ENCODE measurements at regions of chr12 and their contacts with region 1.

Region 1: GRCh38 chr12:32679091-32679919 is at the start of gene DNM1L:
- DNase-seq: peak; percentile 89
- H3K4me3 Mint-ChIP-seq: peak within 1 kb of the TSS; percentile 93
- H3K27ac Mint-ChIP-seq: peak within 1 kb of the TSS; percentile 89
- H3K4me1 Mint-ChIP-seq: peaks cover 25% of the 10 kb centered on the region
- H3K27me3 Mint-ChIP-seq: no peaks in the 10 kb centered on the region
- total RNA-seq, gene DNM1L: 97.5 and 108 TPM in 2 replicates

Region 2: GRCh38 chr12:31659087-31659933 is 1020.0 kb before region 1 on chr12 and contains the start of gene ETFBKMT:
- intact Hi-C with region 1: loop called (anchors 2 kb)
- DNase-seq: peak; percentile 95
- H3K4me3 Mint-ChIP-seq: peak within 1 kb of the TSS; percentile 95
- H3K27ac Mint-ChIP-seq: peak within 1 kb of the TSS; percentile 97
- H3K4me1 Mint-ChIP-seq: peaks cover 5% of the 10 kb centered on the region
- H3K27me3 Mint-ChIP-seq: no peaks in the 10 kb centered on the region
- total RNA-seq, gene ETFBKMT: 0.37 and 0.39 TPM in 2 replicates

Region 3: DNA sequence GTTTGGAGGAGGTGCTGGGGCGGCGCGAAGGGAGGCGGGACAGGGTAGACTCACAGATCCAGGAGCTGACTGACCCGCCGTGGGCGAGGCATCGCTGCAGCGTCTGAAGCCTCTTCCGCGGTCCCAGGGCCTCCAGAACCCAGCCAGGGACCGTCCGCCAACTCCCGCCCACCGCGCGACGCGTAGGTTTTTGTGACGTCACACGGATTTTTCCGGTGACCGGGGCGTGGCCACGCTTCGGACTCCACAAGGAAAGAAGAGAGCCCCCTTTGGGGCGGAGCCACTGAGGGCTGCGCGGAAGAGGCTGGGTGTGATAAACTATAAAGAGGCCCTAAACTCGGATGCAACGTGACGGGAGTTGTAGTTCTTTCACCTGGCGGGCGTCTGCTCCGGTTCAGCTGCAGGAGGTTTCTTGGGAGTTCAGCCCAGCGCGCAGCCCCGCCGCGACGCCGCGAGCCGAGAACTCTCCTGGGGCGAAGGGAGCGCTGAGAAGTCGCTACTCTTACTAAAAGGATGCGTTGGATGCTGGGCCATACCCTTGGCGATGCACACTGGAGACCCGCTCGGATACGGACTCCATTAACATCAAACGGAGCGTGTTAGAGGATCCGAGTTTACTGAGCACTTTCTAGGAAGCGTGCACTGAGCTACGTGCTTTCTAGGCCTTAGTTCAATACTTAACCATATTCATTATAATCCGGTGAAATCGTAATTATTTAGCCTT is 950.2 kb before region 1 on chr12 and contains the start of gene AMN1:
- intact Hi-C with region 1: loop called (anchors 10 kb)
- DNase-seq: peak; percentile 100
- H3K4me3 Mint-ChIP-seq: peak within 1 kb of the TSS; percentile 98
- H3K27ac Mint-ChIP-seq: peak within 1 kb of the TSS; percentile 99
- H3K4me1 Mint-ChIP-seq: peaks cover 35% of the 10 kb centered on the region
- H3K27me3 Mint-ChIP-seq: no peaks in the 10 kb centered on the region
- total RNA-seq, gene AMN1: 1.8 and 2.8 TPM in 2 replicates

Region 4: GRCh38 chr12:32706335-32707024 is 27.2 kb after region 1 on chr12:
- intact Hi-C with region 1: loop called (anchors 2 kb)
- DNase-seq: no peak
- H3K4me3 Mint-ChIP-seq: no peak overlapping the region
- H3K27ac Mint-ChIP-seq: peak overlapping the region; percentile 86
- H3K4me1 Mint-ChIP-seq: peaks cover 49% of the 10 kb centered on the region
- H3K27me3 Mint-ChIP-seq: no peaks in the 10 kb centered on the region

Region 5: GRCh38 chr12:34022079-34022830 is 1343.0 kb after region 1 on chr12 and contains the start of gene ALG10:
- intact Hi-C with region 1: loop called (anchors 5 kb)
- DNase-seq: peak; percentile 95
- H3K4me3 Mint-ChIP-seq: peak within 1 kb of the TSS; percentile 97
- H3K27ac Mint-ChIP-seq: peak within 1 kb of the TSS; percentile 95
- H3K4me1 Mint-ChIP-seq: peaks cover 25% of the 10 kb centered on the region
- H3K27me3 Mint-ChIP-seq: no peaks in the 10 kb centered on the region
- total RNA-seq, gene ALG10: 18.7 and 20.4 TPM in 2 replicates